GM12878 (cell line): ENCODE measurements at regions of chr17 and their contacts with region 1.

Region 1: GRCh38 chr17:67779098-67779672 is 46.1 kb upstream of the BPTF start:
- DNase-seq: no peak
- ATAC-seq: peak; percentile 94
- H3K4me3 ChIP-seq: no peak overlapping the region
- H3K27ac ChIP-seq: no peak overlapping the region
- H3K4me1 ChIP-seq: no peaks in the 10 kb centered on the region
- H3K27me3 ChIP-seq: no peaks in the 10 kb centered on the region; a peak in 1 of 4 replicates
- CTCF ChIP-seq: peak; percentile 37 to 76 (median 65)
- EP300 ChIP-seq: no peak
- POLR2A ChIP-seq: no peak
- RAD21 ChIP-seq: peak; percentile 62

Region 2: GRCh38 chr17:67366193-67367157 is 412.7 kb before region 1 on chr17 and contains the start of gene PSMD12:
- CTCF ChIA-PET with region 1: no interaction called
- POLR2A ChIA-PET with region 1: no interaction called
- RAD21 ChIA-PET with region 1: no interaction called
- SMC1A ChIA-PET with region 1: no interaction called
- in situ Hi-C with region 1: loop called (anchors 10 kb)
- intact Hi-C with region 1: loop called (anchors 10 kb)
- DNase-seq: peak; percentile 63
- ATAC-seq: peak; percentile 94
- H3K4me3 ChIP-seq: peak within 1 kb of the TSS; percentile 98
- H3K27ac ChIP-seq: peak within 1 kb of the TSS; percentile 80
- H3K4me1 ChIP-seq: peaks cover 6% of the 10 kb centered on the region; the same call in 1 of the 2 replicates
- H3K27me3 ChIP-seq: no peaks in the 10 kb centered on the region
- CTCF ChIP-seq: no peak
- EP300 ChIP-seq: no peak
- POLR2A ChIP-seq: peak; percentile 99
- RAD21 ChIP-seq: no peak
- polyA plus RNA-seq, gene PSMD12: 21.2 to 33.0 TPM

Region 3: DNA sequence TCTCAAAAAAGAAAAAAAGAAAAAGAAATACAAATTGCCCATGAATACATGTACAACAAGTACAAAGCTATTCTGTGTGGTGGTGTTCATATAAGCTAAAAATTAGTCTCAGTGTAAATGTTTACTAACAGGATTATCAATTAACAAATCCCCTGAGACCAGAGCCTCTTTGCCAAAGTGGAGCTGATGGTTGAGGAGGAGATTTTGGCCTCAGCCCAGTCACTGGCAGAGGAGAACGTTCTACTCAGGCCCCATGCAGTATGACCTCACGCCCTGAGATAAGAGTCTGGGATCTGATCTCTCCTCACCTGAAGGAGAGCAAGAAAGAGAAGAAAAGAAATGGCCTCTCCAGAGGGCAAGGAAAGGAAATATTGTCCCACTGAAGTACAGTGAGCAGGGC is 97.0 kb before region 1 on chr17:
- CTCF ChIA-PET with region 1: no interaction called
- POLR2A ChIA-PET with region 1: no interaction called
- RAD21 ChIA-PET with region 1: no interaction called
- SMC1A ChIA-PET with region 1: no interaction called
- in situ Hi-C with region 1: no loop called
- intact Hi-C with region 1: no loop called
- DNase-seq: no peak
- ATAC-seq: no peak
- H3K4me3 ChIP-seq: no peak overlapping the region
- H3K27ac ChIP-seq: no peak overlapping the region
- H3K4me1 ChIP-seq: peaks cover 24% of the 10 kb centered on the region
- H3K27me3 ChIP-seq: no peaks in the 10 kb centered on the region
- CTCF ChIP-seq: no peak
- EP300 ChIP-seq: no peak
- POLR2A ChIP-seq: no peak
- RAD21 ChIP-seq: no peak

Region 4: GRCh38 chr17:67824735-67825626 is 45.8 kb after region 1 on chr17 and contains the start of gene BPTF:
- CTCF ChIA-PET with region 1: no interaction called
- POLR2A ChIA-PET with region 1: no interaction called
- RAD21 ChIA-PET with region 1: no interaction called
- SMC1A ChIA-PET with region 1: no interaction called
- in situ Hi-C with region 1: no loop called
- intact Hi-C with region 1: loop called (anchors 1 kb)
- DNase-seq: peak; percentile 72
- ATAC-seq: peak; percentile 88
- H3K4me3 ChIP-seq: peak within 1 kb of the TSS; percentile 89
- H3K27ac ChIP-seq: peak within 1 kb of the TSS; percentile 83
- H3K4me1 ChIP-seq: peaks cover 27% of the 10 kb centered on the region
- H3K27me3 ChIP-seq: no peaks in the 10 kb centered on the region
- CTCF ChIP-seq: peak; percentile 79 to 97 (median 93); a peak in 4 of 6 replicates
- EP300 ChIP-seq: peak in 1 of 2 experiments; percentile 27; a peak in 1 of 4 replicates
- POLR2A ChIP-seq: peak; percentile 89
- RAD21 ChIP-seq: peak; percentile 73
- polyA plus RNA-seq, gene BPTF: 32.9 to 39.7 TPM